ENCODE measurements at regions of chr12 and their contacts with region 1.

Region 1: GRCh38 chr12:3073438-3074250 is 3.5 kb upstream of the TSPAN9 start:
- DNase-seq: peak; percentile 90
- H3K4me3 ChIP-seq: no peak overlapping the region
- H3K27ac ChIP-seq: no peak overlapping the region
- H3K4me1 ChIP-seq: peaks cover 20% of the 10 kb centered on the region
- H3K27me3 ChIP-seq: peaks cover 0 to 3% of the 10 kb centered on the region in 2 experiments
- CTCF ChIP-seq: peak; percentile 94 to 98
- POLR2A ChIP-seq: no peak

Region 2: GRCh38 chr12:3055704-3056685 is 17.6 kb before region 1 on chr12:
- CTCF ChIA-PET with region 1: interaction called, 13 read pairs
- POLR2A ChIA-PET with region 1: no interaction called
- dilution Hi-C with region 1: no loop called
- intact Hi-C with region 1: no loop called
- DNase-seq: no peak
- H3K4me3 ChIP-seq: no peak overlapping the region
- H3K27ac ChIP-seq: no peak overlapping the region
- H3K4me1 ChIP-seq: no peaks in the 10 kb centered on the region
- H3K27me3 ChIP-seq: peaks cover 5% of the 10 kb centered on the region in 2 experiments
- CTCF ChIP-seq: no peak
- POLR2A ChIP-seq: no peak

Region 3: GRCh38 chr12:3102691-3103410 is 29.2 kb after region 1 on chr12:
- CTCF ChIA-PET with region 1: interaction called, 13 read pairs
- POLR2A ChIA-PET with region 1: interaction called, 3 read pairs
- dilution Hi-C with region 1: no loop called
- intact Hi-C with region 1: no loop called
- DNase-seq: no peak
- H3K4me3 ChIP-seq: no peak overlapping the region
- H3K27ac ChIP-seq: no peak overlapping the region
- H3K4me1 ChIP-seq: peaks cover 16% of the 10 kb centered on the region
- H3K27me3 ChIP-seq: no peaks in the 10 kb centered on the region
- CTCF ChIP-seq: no peak
- POLR2A ChIP-seq: no peak

Region 4: DNA sequence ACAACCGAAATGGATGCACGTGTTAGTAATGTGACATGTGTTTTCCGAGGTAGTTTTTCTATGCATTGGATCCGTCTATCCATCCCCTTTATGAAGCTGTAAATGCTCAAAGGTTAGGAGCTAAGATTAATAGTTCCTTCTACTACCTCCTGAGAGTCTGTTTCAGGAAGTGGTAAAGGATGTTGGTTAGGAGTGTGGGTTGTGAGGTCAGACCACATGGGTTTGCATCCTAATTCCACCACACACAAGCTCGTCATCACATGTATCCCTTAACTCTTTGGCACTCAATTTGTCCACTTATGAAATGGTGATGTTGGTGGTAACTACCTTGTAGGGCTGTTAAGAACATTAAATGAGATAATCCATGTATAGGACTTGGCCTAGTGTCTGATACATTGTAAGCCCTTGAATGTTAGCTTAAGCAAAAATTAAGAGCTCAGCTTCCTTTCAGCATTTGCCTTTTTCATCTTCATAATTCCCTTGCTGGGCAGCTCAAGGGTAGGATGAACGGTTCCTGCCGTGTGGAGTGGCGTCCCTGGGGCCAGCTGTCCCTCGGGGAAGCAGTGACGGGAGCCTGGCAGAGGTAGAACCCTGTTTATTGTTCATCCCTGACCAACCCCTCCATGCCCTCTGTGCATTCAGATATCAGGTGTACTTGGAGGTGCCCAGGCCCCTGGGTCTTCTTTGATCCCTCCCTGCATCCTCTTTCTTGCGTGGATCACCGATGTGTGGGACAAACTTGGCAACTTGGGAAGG is 55.8 kb after region 1 on chr12:
- CTCF ChIA-PET with region 1: interaction called, 65 read pairs
- POLR2A ChIA-PET with region 1: no interaction called
- dilution Hi-C with region 1: no loop called
- intact Hi-C with region 1: no loop called
- DNase-seq: no peak
- H3K4me3 ChIP-seq: no peak overlapping the region
- H3K27ac ChIP-seq: no peak overlapping the region
- H3K4me1 ChIP-seq: peaks cover 26% of the 10 kb centered on the region
- H3K27me3 ChIP-seq: no peaks in the 10 kb centered on the region
- CTCF ChIP-seq: no peak
- POLR2A ChIP-seq: no peak

Region 5: DNA sequence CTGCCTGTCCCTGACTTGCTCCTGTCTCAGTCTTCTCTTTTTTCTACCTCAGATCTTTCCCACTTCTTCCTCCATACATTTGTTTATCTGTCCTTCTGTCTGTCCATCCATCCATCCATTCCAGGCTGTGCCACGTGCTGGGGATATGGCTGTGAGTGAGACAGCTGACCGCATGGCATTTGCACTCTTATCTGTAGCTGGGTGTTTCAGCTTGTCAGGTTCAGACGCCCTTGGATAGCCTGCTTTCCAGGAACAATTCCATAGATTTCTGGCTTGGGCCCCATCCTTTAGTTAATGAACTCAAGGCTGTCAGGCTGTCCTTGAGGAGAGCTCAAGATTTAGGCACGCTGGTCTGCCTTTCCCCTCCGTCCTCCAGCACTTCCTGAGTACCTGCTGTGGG is 120.1 kb after region 1 on chr12:
- CTCF ChIA-PET with region 1: interaction called, 11 read pairs
- POLR2A ChIA-PET with region 1: no interaction called
- dilution Hi-C with region 1: no loop called
- intact Hi-C with region 1: no loop called
- DNase-seq: no peak
- H3K4me3 ChIP-seq: no peak overlapping the region
- H3K27ac ChIP-seq: no peak overlapping the region
- H3K4me1 ChIP-seq: no peaks in the 10 kb centered on the region
- H3K27me3 ChIP-seq: no peaks in the 10 kb centered on the region
- CTCF ChIP-seq: no peak
- POLR2A ChIP-seq: no peak

Region 6: DNA sequence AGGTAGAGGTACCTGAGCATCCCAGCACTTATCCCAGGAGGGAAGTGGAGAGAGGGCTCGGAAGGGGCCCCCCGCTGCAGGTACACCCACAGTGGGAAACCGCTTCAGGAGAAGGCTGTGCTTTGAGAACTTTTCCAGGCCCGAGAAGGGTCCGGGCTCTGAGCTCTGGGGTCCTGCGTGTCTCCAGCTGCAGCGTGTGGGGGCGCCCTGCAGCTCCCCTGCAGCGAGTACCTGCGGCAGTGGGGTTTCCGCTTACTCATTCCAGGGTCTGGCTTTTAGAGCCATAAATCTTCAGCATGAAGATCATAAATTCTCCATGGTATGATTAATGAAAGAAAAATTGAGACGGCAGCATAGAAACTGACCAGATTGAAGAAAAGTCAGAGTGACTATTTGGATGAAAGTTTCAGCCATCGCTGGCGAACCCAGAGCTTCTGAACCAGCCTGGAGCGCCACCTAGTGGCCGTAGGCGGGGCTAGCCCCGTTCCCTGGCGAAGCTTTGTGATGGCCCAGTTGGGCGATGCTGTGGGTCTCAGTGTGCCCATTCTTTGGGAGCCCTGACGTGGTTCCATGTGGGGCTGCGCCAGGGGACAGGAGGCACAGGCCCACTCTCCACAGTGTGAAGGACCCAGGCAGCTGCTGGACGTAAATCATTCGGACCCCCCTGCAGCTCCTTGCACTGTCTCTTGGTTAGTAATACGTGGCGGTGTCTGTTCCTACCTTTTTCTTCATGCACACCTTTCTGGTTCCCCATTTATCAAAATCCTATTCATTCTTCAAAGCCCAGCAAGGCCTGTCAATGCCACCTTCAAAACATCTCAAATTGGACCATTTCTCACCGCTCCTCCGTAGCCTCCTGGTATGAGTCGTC is 201.8 kb after region 1 on chr12:
- CTCF ChIA-PET with region 1: interaction called, 222 read pairs
- POLR2A ChIA-PET with region 1: no interaction called
- dilution Hi-C with region 1: loop called (anchors 10 kb)
- intact Hi-C with region 1: loop called (anchors 1 kb)
- DNase-seq: peak; percentile 48
- H3K4me3 ChIP-seq: no peak overlapping the region
- H3K27ac ChIP-seq: no peak overlapping the region
- H3K4me1 ChIP-seq: no peaks in the 10 kb centered on the region
- H3K27me3 ChIP-seq: no peaks in the 10 kb centered on the region
- CTCF ChIP-seq: peak; percentile 95 to 96
- POLR2A ChIP-seq: no peak